CD8-positive, alpha-beta T cell (primary cell): ENCODE measurements at regions of chr4 and their contacts with region 1.

Region 1: DNA sequence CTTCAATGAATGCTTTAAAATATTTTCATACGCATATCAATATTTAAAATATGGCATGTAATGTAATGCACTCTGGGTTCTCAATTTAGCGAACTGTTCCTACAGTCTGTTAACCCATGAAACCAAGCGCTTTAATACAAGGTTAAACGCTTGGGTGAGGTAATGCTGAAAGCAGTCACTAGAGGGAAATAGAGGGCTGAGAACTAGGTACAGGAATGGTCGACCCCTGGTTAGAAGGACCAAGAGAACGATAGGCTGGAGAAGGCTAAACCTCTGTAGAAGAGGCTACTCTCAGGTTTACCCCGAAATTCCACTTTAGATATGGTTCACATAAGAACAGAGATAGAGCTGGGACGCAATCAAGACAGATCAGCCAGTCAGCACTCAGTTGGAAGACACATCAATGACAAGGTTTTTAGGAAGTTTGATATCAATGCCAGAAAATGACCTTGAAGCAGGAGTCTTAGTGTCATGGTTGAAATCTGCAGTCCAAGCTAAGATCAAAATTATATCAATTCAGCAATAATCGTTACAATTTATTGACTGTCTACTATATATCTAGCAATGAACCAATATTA is 26.9 kb downstream of the ARSJ start:
- DNase-seq: peak in 2 of 9 experiments; percentile 48 to 57
- ATAC-seq: peak; percentile 71
- H3K4me3 ChIP-seq: no peak overlapping the region
- H3K4me3 Mint-ChIP-seq: no peak overlapping the region
- H3K27ac ChIP-seq: no peak overlapping the region
- H3K27ac Mint-ChIP-seq: no peak overlapping the region
- H3K4me1 ChIP-seq: no peaks in the 10 kb centered on the region
- H3K4me1 Mint-ChIP-seq: peaks cover 8% of the 10 kb centered on the region
- H3K27me3 ChIP-seq: no peaks in the 10 kb centered on the region
- H3K27me3 Mint-ChIP-seq: peaks cover 4% of the 10 kb centered on the region
- CTCF ChIP-seq: peak; percentile 78

Region 2: GRCh38 chr4:114005569-114006442 is 53.3 kb after region 1 on chr4:
- CTCF ChIA-PET with region 1: no interaction called
- POLR2A ChIA-PET with region 1: interaction called, 3 read pairs
- intact Hi-C with region 1: loop called in 1 of 2 experiments (anchors 10 kb)
- DNase-seq: peak in 2 of 9 experiments; percentile 42 to 47
- ATAC-seq: peak; percentile 58
- H3K4me3 ChIP-seq: no peak overlapping the region
- H3K4me3 Mint-ChIP-seq: no peak overlapping the region
- H3K27ac ChIP-seq: no peak overlapping the region
- H3K27ac Mint-ChIP-seq: peak overlapping the region; percentile 10
- H3K4me1 ChIP-seq: no peaks in the 10 kb centered on the region
- H3K4me1 Mint-ChIP-seq: peaks cover 33% of the 10 kb centered on the region
- H3K27me3 ChIP-seq: no peaks in the 10 kb centered on the region
- H3K27me3 Mint-ChIP-seq: peaks cover 2% of the 10 kb centered on the region
- CTCF ChIP-seq: no peak

Region 3: DNA sequence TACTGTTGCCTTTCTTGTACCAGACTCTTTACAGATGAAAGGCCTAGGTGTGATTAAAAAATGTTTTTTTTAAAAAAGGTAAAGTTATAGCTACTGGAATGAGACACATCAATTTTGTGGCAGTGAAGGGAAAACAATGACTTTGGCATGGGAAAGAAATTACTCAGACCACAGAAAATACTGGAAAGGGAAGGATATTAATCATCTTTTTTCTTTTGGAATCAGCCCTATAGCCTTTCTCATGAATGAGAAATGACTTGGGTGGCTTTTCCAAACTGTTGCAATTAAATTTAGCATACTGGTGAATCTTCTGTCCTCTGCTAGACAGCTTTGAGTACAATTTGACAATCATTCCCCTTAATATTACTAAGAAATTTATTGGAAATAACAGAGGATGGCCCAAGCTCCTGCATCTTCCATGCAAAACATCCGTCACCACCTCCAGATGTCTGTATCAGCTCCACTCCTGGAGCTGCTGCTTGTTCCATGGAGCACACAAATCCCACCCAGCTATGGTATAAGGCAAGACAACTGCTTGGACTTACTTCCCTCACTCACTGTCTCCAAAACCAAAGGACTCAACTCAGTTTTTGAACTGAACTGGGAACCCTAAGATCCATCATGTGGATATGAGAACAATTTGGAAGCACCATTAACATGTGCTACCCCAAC is 124.5 kb after region 1 on chr4:
- CTCF ChIA-PET with region 1: interaction called, 18 read pairs
- POLR2A ChIA-PET with region 1: no interaction called
- intact Hi-C with region 1: no loop called
- DNase-seq: no peak
- ATAC-seq: no peak
- H3K4me3 ChIP-seq: no peak overlapping the region
- H3K4me3 Mint-ChIP-seq: no peak overlapping the region
- H3K27ac ChIP-seq: no peak overlapping the region
- H3K27ac Mint-ChIP-seq: no peak overlapping the region
- H3K4me1 ChIP-seq: no peaks in the 10 kb centered on the region
- H3K4me1 Mint-ChIP-seq: no peaks in the 10 kb centered on the region
- H3K27me3 ChIP-seq: no peaks in the 10 kb centered on the region
- H3K27me3 Mint-ChIP-seq: no peaks in the 10 kb centered on the region
- CTCF ChIP-seq: no peak

Region 4: DNA sequence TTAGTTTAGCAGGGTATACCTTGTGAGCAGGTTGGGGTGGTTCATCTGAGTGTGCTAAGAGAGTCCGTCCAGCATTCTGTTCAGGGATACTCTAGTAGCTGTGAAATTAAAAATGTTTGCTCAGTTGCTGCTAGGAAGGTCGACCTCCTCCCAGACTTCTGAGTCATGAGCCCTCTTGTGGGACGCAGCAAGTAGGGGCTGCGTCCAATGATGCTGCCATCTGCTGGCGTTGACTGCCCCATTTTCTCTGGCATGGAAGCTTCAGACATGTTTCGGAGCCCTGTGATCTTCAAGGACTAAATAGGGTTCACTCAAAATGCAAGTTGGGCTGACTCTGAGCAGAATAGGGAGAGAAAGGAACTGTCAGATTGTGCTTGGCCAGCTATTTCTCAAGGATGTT is 227.9 kb after region 1 on chr4:
- CTCF ChIA-PET with region 1: interaction called, 4 read pairs
- POLR2A ChIA-PET with region 1: no interaction called
- intact Hi-C with region 1: loop called (anchors 1 to 5 kb)
- DNase-seq: peak in 8 of 9 experiments; percentile 9 to 63 (median 46)
- ATAC-seq: peak; percentile 29
- H3K4me3 ChIP-seq: no peak overlapping the region
- H3K4me3 Mint-ChIP-seq: no peak overlapping the region
- H3K27ac ChIP-seq: no peak overlapping the region
- H3K27ac Mint-ChIP-seq: no peak overlapping the region
- H3K4me1 ChIP-seq: no peaks in the 10 kb centered on the region
- H3K4me1 Mint-ChIP-seq: no peaks in the 10 kb centered on the region
- H3K27me3 ChIP-seq: no peaks in the 10 kb centered on the region
- H3K27me3 Mint-ChIP-seq: no peaks in the 10 kb centered on the region
- CTCF ChIP-seq: no peak

Region 5: DNA sequence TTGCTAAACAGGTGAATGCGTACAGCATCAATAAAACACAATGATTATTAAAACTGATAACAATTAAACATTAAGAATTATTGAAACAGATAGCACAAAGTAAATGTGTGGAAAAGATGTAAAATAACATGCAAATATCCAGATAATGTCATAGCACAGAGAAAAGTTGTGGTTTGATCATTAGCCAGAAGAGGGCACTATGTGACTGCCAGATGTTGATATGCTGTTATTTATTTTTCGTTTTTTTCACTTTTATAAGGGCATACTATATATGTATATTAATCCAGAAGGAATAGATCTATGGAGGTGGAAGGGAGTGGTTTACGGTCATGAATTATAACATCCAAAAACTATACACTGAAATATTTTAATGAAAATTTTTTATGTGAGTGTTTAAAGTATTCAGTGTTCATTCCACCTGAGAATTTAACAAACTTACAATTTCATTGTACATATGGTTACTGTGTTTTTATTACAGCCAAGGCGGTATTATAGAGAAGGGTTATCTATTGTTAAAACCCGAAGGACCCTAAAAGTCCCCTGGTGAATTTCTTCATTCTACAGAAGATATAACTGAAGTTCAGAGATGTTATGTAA is 434.2 kb after region 1 on chr4:
- CTCF ChIA-PET with region 1: no interaction called
- POLR2A ChIA-PET with region 1: no interaction called
- intact Hi-C with region 1: loop called in 1 of 2 experiments (anchors 2 kb)
- DNase-seq: peak in 2 of 9 experiments; percentile 16 to 38
- ATAC-seq: no peak
- H3K4me3 ChIP-seq: no peak overlapping the region
- H3K4me3 Mint-ChIP-seq: no peak overlapping the region
- H3K27ac ChIP-seq: no peak overlapping the region
- H3K27ac Mint-ChIP-seq: no peak overlapping the region
- H3K4me1 ChIP-seq: no peaks in the 10 kb centered on the region
- H3K4me1 Mint-ChIP-seq: no peaks in the 10 kb centered on the region
- H3K27me3 ChIP-seq: no peaks in the 10 kb centered on the region
- H3K27me3 Mint-ChIP-seq: peaks cover 8% of the 10 kb centered on the region
- CTCF ChIP-seq: peak; percentile 54

Region 6: DNA sequence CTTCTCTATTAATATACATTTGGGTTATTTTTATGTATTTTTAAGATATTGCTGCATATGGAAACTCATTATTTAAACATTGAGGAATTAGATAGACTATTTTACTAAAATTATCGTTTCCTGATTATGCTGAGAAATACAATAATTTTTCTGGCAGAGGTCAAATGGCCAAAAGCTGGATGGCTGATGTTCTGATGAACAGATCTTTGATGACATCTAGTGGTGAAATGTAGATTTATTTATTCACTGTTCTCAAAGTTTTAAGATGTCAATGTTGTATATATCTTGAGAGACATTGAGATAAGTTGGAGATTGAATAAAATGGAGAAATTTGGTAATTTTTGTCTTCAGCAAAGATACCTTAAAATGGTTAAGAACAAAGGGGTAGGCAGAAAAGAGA is 742.2 kb after region 1 on chr4:
- CTCF ChIA-PET with region 1: no interaction called
- POLR2A ChIA-PET with region 1: no interaction called
- intact Hi-C with region 1: loop called in 1 of 2 experiments (anchors 10 kb)
- DNase-seq: peak in 2 of 9 experiments; percentile 23 to 41
- ATAC-seq: no peak
- H3K4me3 ChIP-seq: no peak overlapping the region
- H3K4me3 Mint-ChIP-seq: no peak overlapping the region
- H3K27ac ChIP-seq: no peak overlapping the region
- H3K27ac Mint-ChIP-seq: no peak overlapping the region
- H3K4me1 ChIP-seq: no peaks in the 10 kb centered on the region
- H3K4me1 Mint-ChIP-seq: no peaks in the 10 kb centered on the region
- H3K27me3 ChIP-seq: no peaks in the 10 kb centered on the region
- H3K27me3 Mint-ChIP-seq: peaks cover 8% of the 10 kb centered on the region
- CTCF ChIP-seq: peak; percentile 52